Activated naive CD4-positive, alpha-beta T cell treated with anti-CD3 and anti-CD28 coated beads for 36 hours (primary cell): ENCODE measurements at regions of chr1 and their contacts with region 1.

Region 1: GRCh38 chr1:156571949-156572662 is at the start of gene IQGAP3:
- DNase-seq: peak; percentile 79
- H3K4me3 Mint-ChIP-seq: peak within 1 kb of the TSS; percentile 93
- H3K27ac Mint-ChIP-seq: peak within 1 kb of the TSS; percentile 6
- H3K4me1 Mint-ChIP-seq: peaks cover 18% of the 10 kb centered on the region
- H3K27me3 Mint-ChIP-seq: peaks cover 30% of the 10 kb centered on the region
- total RNA-seq, gene IQGAP3: 9.4 to 10.6 TPM

Region 2: GRCh38 chr1:156489166-156489934 is 82.8 kb before region 1 on chr1:
- CTCF ChIA-PET with region 1: no interaction called
- intact Hi-C with region 1: loop called (anchors 1 kb)
- DNase-seq: peak; percentile 79
- H3K4me3 Mint-ChIP-seq: peak overlapping the region; percentile 10
- H3K27ac Mint-ChIP-seq: peak overlapping the region; percentile 82
- H3K4me1 Mint-ChIP-seq: peaks cover 81% of the 10 kb centered on the region
- H3K27me3 Mint-ChIP-seq: no peaks in the 10 kb centered on the region

Region 3: GRCh38 chr1:156524481-156524869 is 47.6 kb before region 1 on chr1:
- CTCF ChIA-PET with region 1: no interaction called
- intact Hi-C with region 1: loop called (anchors 5 kb)
- DNase-seq: peak; percentile 45
- H3K4me3 Mint-ChIP-seq: no peak overlapping the region
- H3K27ac Mint-ChIP-seq: no peak overlapping the region
- H3K4me1 Mint-ChIP-seq: peaks cover 34% of the 10 kb centered on the region
- H3K27me3 Mint-ChIP-seq: no peaks in the 10 kb centered on the region